K562 (cell line): ENCODE measurements at regions of chr17 and their contacts with region 1.

Region 1: DNA sequence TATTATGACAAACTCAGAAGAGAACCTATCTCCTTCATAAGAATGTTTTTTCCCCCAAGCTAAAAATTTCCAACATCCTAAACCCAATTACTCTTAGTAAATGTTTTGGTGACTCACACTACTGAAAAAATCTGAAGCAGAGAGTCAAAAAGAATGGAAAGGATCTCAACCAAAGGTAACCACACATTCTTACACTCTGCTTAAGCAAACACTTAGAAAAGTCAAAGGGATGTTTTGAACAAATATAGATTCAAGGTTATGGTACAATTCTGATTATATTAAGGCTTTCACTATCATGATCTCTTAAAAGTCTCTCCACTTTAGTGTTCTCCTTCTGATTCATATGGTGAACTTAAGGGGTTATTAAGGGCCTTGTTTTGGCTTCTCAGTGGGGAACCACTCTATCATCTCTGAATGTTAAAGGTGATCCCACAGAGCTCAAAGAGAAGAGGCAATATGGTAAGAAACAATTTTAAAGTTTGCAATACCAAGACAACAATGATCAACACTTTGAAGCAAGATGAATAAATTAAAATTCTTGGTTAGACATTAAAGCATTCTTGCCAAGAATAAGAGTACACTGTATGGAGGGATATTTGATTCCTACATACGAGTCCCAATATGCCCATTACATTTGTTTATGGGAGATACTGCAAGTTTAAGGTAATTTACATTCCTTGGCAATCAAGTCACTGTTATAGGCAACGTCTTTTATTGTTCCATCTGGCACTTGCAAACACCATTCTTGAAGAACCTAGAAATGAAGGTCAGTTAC is 69.2 kb downstream of the CDC27 start:
- DNase-seq: no peak
- ATAC-seq: no peak
- H3K4me3 ChIP-seq: no peak overlapping the region
- H3K27ac ChIP-seq: no peak overlapping the region
- H3K4me1 ChIP-seq: peaks cover 0 to 4% of the 10 kb centered on the region in 2 experiments; a peak in 2 of 5 replicates
- H3K27me3 ChIP-seq: no peaks in the 10 kb centered on the region
- CTCF ChIP-seq: no peak
- EP300 ChIP-seq: no peak
- POLR2A ChIP-seq: no peak
- RAD21 ChIP-seq: no peak

Region 2: GRCh38 chr17:47131761-47132160 is 11.8 kb after region 1 on chr17:
- CTCF ChIA-PET with region 1: no interaction called
- POLR2A ChIA-PET with region 1: interaction called, 17 read pairs
- in situ Hi-C with region 1: no loop called
- intact Hi-C with region 1: no loop called
- DNase-seq: no peak
- ATAC-seq: no peak
- H3K4me3 ChIP-seq: no peak overlapping the region
- H3K27ac ChIP-seq: no peak overlapping the region
- H3K4me1 ChIP-seq: no peaks in the 10 kb centered on the region
- H3K27me3 ChIP-seq: no peaks in the 10 kb centered on the region
- CTCF ChIP-seq: no peak
- EP300 ChIP-seq: no peak
- POLR2A ChIP-seq: no peak
- RAD21 ChIP-seq: no peak

Region 3: GRCh38 chr17:47465165-47465564 is 345.2 kb after region 1 on chr17:
- CTCF ChIA-PET with region 1: no interaction called
- POLR2A ChIA-PET with region 1: no interaction called
- in situ Hi-C with region 1: no loop called
- intact Hi-C with region 1: no loop called
- DNase-seq: no peak
- ATAC-seq: no peak
- H3K4me3 ChIP-seq: no peak overlapping the region
- H3K27ac ChIP-seq: no peak overlapping the region
- H3K4me1 ChIP-seq: no peaks in the 10 kb centered on the region
- H3K27me3 ChIP-seq: no peaks in the 10 kb centered on the region
- CTCF ChIP-seq: no peak
- EP300 ChIP-seq: no peak
- POLR2A ChIP-seq: no peak
- RAD21 ChIP-seq: no peak